Posterior cingulate gyrus (tissue), 11 donors: ENCODE measurements at regions of chr15 and their contacts with region 1.

Region 1: GRCh38 chr15:56886932-56887781 is 31.3 kb upstream of the TCF12 start:
- DNase-seq: peak; percentile 86 to 99 (median 93)

Region 2: DNA sequence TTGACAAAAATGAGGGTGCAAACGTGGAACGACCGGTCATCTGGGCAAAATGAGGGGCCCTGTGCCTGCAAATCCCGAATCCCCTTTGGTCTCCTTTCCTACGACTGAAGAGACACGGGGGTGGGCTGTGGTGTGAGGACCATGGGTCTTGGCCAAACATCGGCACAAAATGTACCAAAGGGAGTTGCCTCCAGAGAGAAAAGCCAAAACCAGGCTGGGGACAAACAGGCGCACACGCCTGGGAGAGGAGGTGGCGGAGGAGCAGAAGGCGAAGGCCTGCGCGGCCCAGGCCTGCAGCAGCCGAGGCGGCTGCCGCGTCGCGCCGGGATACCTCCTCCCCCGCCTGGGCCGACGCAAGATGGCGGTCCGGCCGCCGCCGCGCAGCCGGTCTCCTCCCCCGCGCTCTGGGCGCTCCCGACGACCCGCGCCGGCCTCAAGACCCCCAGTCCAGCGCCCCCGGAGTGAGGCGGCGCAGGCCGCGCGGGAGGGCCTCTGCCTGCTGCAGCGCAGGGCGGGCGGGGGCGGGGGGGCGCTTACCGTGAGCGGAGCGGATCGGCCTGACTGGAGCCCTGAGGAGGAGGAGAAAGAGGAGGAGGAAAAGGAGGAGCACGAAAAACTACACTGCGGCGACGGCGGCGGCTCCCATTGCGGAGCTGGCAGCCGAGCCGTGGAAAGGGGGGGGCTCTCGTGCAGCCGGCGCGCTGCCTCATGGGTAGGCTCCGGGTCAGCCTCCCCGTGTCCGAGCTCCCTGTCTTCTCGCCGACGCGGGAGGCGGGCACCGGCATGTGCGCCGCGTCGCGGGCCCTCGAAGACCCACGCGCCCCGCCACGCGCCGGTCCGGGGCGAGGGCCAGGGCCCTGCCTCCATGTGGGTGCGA is 154.0 kb before region 1 on chr15 and contains the start of gene ZNF280D:
- intact Hi-C with region 1: loop called (anchors 2 kb)
- DNase-seq: peak; percentile 81 to 97 (median 85)